CD8-positive, alpha-beta T cell (primary cell): ENCODE measurements at regions of chr1 and their contacts with region 1.

Region 1: GRCh38 chr1:155050560-155051341 is at the start of gene ADAM15:
- DNase-seq: peak; percentile 64 to 88 (median 80)
- ATAC-seq: peak; percentile 83
- H3K4me3 ChIP-seq: peak within 1 kb of the TSS; percentile 86 to 94
- H3K4me3 Mint-ChIP-seq: peak within 1 kb of the TSS; percentile 86
- H3K27ac ChIP-seq: peak within 1 kb of the TSS; percentile 45 to 65
- H3K27ac Mint-ChIP-seq: peak within 1 kb of the TSS; percentile 85
- H3K4me1 ChIP-seq: peaks cover 27% of the 10 kb centered on the region
- H3K4me1 Mint-ChIP-seq: peaks cover 19% of the 10 kb centered on the region
- H3K27me3 ChIP-seq: no peaks in the 10 kb centered on the region
- H3K27me3 Mint-ChIP-seq: no peaks in the 10 kb centered on the region
- CTCF ChIP-seq: peak; percentile 99
- total RNA-seq, gene ADAM15: 10.8 to 11.8 TPM

Region 2: GRCh38 chr1:154607609-154608396 is 442.9 kb before region 1 on chr1 and contains the start of gene ADAR:
- CTCF ChIA-PET with region 1: no interaction called
- POLR2A ChIA-PET with region 1: no interaction called
- intact Hi-C with region 1: loop called (anchors 5 kb)
- DNase-seq: peak; percentile 72 to 98 (median 87)
- ATAC-seq: peak; percentile 85
- H3K4me3 ChIP-seq: peak within 1 kb of the TSS; percentile 89 to 90
- H3K4me3 Mint-ChIP-seq: peak within 1 kb of the TSS; percentile 98
- H3K27ac ChIP-seq: peak within 1 kb of the TSS; percentile 92 to 96
- H3K27ac Mint-ChIP-seq: peak within 1 kb of the TSS; percentile 98
- H3K4me1 ChIP-seq: peaks cover 59% of the 10 kb centered on the region
- H3K4me1 Mint-ChIP-seq: peaks cover 73% of the 10 kb centered on the region
- H3K27me3 ChIP-seq: no peaks in the 10 kb centered on the region
- H3K27me3 Mint-ChIP-seq: no peaks in the 10 kb centered on the region
- CTCF ChIP-seq: no peak
- total RNA-seq, gene ADAR: 221 to 238 TPM

Region 3: GRCh38 chr1:154974063-154974807 is 76.5 kb before region 1 on chr1 and contains the start of gene CKS1B:
- CTCF ChIA-PET with region 1: interaction called, 3 read pairs
- POLR2A ChIA-PET with region 1: no interaction called
- intact Hi-C with region 1: loop called in 1 of 2 experiments (anchors 1 kb)
- DNase-seq: peak; percentile 92 to 99 (median 97)
- ATAC-seq: peak; percentile 86
- H3K4me3 ChIP-seq: peak within 1 kb of the TSS; percentile 67
- H3K4me3 Mint-ChIP-seq: no peak within 1 kb of the TSS
- H3K27ac ChIP-seq: peak within 1 kb of the TSS; percentile 90 to 95
- H3K27ac Mint-ChIP-seq: no peak within 1 kb of the TSS
- H3K4me1 ChIP-seq: peaks cover 23% of the 10 kb centered on the region
- H3K4me1 Mint-ChIP-seq: peaks cover 26% of the 10 kb centered on the region
- H3K27me3 ChIP-seq: no peaks in the 10 kb centered on the region
- H3K27me3 Mint-ChIP-seq: no peaks in the 10 kb centered on the region
- CTCF ChIP-seq: no peak
- total RNA-seq, gene CKS1B: 2.3 to 2.9 TPM

Region 4: GRCh38 chr1:155287987-155288543 is 237.3 kb after region 1 on chr1:
- CTCF ChIA-PET with region 1: no interaction called
- POLR2A ChIA-PET with region 1: no interaction called
- intact Hi-C with region 1: no loop called
- DNase-seq: no peak
- ATAC-seq: no peak
- H3K4me3 ChIP-seq: no peak overlapping the region
- H3K4me3 Mint-ChIP-seq: no peak overlapping the region
- H3K27ac ChIP-seq: no peak overlapping the region
- H3K27ac Mint-ChIP-seq: no peak overlapping the region
- H3K4me1 ChIP-seq: no peaks in the 10 kb centered on the region
- H3K4me1 Mint-ChIP-seq: no peaks in the 10 kb centered on the region
- H3K27me3 ChIP-seq: no peaks in the 10 kb centered on the region
- H3K27me3 Mint-ChIP-seq: no peaks in the 10 kb centered on the region
- CTCF ChIP-seq: no peak